Right lobe of liver (tissue), 6 donors: ENCODE measurements at regions of chr21 and their contacts with region 1.

Region 1: DNA sequence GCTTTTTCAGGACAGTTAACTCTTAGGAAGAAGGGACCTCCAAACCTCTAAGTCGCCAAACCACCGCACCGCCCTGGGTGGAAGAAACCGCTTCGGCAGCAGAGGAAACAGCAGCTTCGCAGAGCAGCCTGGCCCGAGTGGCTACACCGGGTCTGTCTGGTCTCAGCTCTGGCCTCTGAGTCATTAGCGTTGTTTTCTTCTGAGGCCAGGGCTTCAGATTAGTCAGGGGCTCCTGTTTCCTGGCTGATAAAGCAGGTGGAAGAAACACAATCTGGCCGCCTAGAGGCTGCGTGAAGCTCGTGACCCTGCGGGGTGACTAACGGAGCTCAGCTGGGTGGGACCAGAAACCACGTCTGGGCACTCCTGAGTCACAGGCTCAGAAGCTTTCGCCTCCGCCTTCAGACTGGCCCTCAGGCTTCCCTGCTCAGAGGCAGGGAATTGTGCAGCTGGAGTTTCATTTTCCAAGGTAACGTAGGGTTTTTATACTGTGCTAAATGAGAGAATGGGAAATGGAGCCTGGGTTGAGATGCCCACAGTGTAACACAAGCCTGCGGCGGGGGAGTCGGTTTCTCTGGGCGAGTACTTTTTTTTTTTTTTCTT is 44.9 kb downstream of the CHAF1B start:
- DNase-seq: peak; percentile 59 to 71 (median 70)
- ATAC-seq: peak; percentile 81 to 91 (median 88)
- H3K4me3 ChIP-seq: no peak overlapping the region
- H3K27ac ChIP-seq: peak overlapping the region; percentile 9 to 72 (median 24)
- H3K4me1 ChIP-seq: no peaks in the 10 kb centered on the region
- H3K27me3 ChIP-seq: no peaks in the 10 kb centered on the region
- CTCF ChIP-seq: no peak
- POLR2A ChIP-seq: peak; percentile 50

Region 2: DNA sequence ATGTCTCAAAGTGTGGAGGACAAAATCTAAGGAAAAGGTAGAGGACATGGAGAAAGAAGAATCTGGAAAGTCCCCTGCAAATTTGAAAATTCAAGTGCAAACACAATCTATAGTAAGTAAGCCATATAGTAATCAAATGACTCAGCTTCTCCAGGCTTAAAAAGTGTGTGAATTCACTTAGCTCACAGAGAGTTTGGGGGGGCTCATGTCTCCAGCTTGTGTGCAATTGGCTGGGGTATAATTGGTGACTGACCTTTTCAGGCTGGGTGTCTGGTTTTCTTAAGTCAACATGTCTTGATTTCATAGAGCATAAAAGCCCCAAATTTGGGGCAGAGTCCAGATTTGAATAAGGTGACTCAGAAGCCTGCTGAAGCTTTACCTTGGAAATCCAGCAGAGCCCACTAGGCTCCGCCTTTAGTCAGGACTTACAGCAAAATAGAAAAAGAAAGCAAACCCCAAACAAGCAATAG is 41.2 kb after region 1 on chr21:
- intact Hi-C with region 1: loop called in 1 of 2 experiments (anchors 10 kb)
- DNase-seq: no peak
- ATAC-seq: peak in 2 of 4 donors; percentile 31 to 72
- H3K4me3 ChIP-seq: no peak overlapping the region
- H3K27ac ChIP-seq: no peak overlapping the region
- H3K4me1 ChIP-seq: peaks cover 0 to 46% (median 9%) of the 10 kb centered on the region in 4 donors
- H3K27me3 ChIP-seq: no peaks in the 10 kb centered on the region
- CTCF ChIP-seq: no peak
- POLR2A ChIP-seq: no peak